Activated CD4-positive, alpha-beta memory T cell treated with anti-CD3 and anti-CD28 coated beads for 36 hours (primary cell): ENCODE measurements at regions of chr1 and their contacts with region 1.

Region 1: GRCh38 chr1:176206961-176207902 is at the start of gene COP1:
- DNase-seq: peak; percentile 98
- H3K4me3 Mint-ChIP-seq: peak within 1 kb of the TSS; percentile 99
- H3K27ac Mint-ChIP-seq: peak within 1 kb of the TSS; percentile 97
- H3K4me1 Mint-ChIP-seq: peaks cover 24% of the 10 kb centered on the region
- H3K27me3 Mint-ChIP-seq: no peaks in the 10 kb centered on the region
- total RNA-seq, gene COP1: 34.2 to 34.7 TPM

Region 2: DNA sequence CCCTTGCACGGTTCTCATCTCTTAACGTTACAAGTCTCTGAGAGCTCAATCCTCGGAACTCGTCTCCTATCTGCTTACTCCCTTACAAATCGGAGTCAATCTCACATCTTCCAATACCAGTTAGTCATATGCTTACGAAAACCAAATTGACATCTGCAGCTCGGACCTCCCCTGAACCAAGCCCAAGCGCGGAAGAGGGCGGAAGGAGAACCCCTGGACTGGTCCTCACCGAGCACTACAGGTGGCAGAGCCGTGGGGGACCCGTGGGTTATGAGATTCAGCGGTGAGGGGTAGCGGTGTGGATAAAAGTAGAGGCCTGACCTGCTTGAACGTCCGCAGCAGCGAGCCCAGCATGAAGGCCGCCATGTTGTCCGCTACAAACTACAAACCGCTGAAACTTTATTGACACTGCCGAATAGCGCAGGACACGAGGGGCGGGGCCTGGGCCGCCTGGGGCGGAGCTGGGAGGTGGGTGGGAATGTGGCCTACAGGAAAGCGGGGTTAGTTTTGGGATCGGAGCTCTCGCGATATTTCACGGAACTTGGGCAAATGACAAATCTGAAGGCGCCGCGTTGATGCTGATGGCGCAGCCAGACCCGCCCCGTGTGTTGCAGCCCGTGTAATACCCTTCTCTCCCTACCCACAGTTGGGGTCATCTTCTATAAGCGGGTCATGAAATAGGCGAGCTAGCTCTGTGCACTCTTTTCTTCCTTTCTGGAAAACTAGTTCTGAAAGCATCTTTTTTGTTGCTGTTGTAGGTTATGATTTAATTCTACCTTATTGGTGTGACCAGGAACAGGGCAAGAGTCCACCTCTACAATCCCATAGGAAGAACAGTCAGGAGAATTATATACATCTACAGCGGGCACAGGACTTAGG is 1184.0 kb before region 1 on chr1 and contains the start of gene MRPS14:
- CTCF ChIA-PET with region 1: no interaction called
- POLR2A ChIA-PET with region 1: interaction called, 3 read pairs
- intact Hi-C with region 1: loop called (anchors 2 kb)
- DNase-seq: peak; percentile 99
- H3K4me3 Mint-ChIP-seq: peak within 1 kb of the TSS; percentile 94
- H3K27ac Mint-ChIP-seq: peak within 1 kb of the TSS; percentile 88
- H3K4me1 Mint-ChIP-seq: peaks cover 24% of the 10 kb centered on the region
- H3K27me3 Mint-ChIP-seq: no peaks in the 10 kb centered on the region
- total RNA-seq, gene MRPS14: 44.7 to 47.6 TPM

Region 3: GRCh38 chr1:176009951-176010350 is 197.3 kb before region 1 on chr1:
- CTCF ChIA-PET with region 1: no interaction called
- POLR2A ChIA-PET with region 1: no interaction called
- intact Hi-C with region 1: no loop called
- DNase-seq: no peak
- H3K4me3 Mint-ChIP-seq: no peak overlapping the region
- H3K27ac Mint-ChIP-seq: no peak overlapping the region
- H3K4me1 Mint-ChIP-seq: no peaks in the 10 kb centered on the region
- H3K27me3 Mint-ChIP-seq: no peaks in the 10 kb centered on the region

Region 4: DNA sequence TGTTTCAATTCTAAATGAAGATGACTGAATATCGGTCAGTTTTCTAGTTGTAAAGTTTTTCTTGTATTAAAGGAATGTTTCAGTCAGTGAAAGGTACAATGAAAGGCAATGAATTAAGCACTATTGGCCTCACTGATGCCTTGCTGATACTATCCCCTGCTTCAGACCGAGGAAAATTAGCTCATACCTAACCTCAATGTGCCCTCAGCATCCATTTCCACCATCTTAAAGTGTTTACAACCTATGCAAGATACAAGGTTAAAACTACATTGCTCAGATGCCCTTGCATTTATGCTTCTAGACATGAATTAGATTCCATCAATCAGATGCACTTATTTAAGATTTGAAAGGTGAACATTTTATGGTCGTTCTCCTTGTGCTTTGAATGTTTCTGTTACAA is 184.7 kb before region 1 on chr1:
- CTCF ChIA-PET with region 1: no interaction called
- POLR2A ChIA-PET with region 1: no interaction called
- intact Hi-C with region 1: loop called (anchors 10 kb)
- DNase-seq: no peak
- H3K4me3 Mint-ChIP-seq: no peak overlapping the region
- H3K27ac Mint-ChIP-seq: no peak overlapping the region
- H3K4me1 Mint-ChIP-seq: peaks cover 13% of the 10 kb centered on the region
- H3K27me3 Mint-ChIP-seq: no peaks in the 10 kb centered on the region

Region 5: DNA sequence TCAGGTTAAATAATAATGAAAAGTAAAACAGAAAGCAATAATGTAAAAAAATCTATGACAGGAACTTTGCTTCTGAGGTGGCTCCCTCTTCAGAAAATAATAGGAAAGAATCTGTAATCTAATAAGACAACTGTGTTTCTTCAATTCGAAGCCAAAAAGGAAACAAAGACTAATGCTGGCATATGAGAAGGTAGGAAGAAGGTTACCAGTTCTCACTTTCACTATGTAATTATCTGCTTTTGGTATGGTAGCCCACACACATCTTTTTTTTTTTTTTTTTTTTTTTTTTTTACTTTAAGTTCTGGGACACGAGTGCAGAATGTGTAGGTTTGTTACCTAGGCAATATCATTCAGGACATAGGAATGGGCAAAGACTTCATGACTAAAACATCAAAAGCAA is 47.2 kb before region 1 on chr1:
- CTCF ChIA-PET with region 1: no interaction called
- POLR2A ChIA-PET with region 1: interaction called, 3 read pairs
- intact Hi-C with region 1: loop called (anchors 1 kb)
- DNase-seq: no peak
- H3K4me3 Mint-ChIP-seq: peak overlapping the region; percentile 36
- H3K27ac Mint-ChIP-seq: peak overlapping the region; percentile 83
- H3K4me1 Mint-ChIP-seq: peaks cover 44% of the 10 kb centered on the region
- H3K27me3 Mint-ChIP-seq: no peaks in the 10 kb centered on the region

Region 6: DNA sequence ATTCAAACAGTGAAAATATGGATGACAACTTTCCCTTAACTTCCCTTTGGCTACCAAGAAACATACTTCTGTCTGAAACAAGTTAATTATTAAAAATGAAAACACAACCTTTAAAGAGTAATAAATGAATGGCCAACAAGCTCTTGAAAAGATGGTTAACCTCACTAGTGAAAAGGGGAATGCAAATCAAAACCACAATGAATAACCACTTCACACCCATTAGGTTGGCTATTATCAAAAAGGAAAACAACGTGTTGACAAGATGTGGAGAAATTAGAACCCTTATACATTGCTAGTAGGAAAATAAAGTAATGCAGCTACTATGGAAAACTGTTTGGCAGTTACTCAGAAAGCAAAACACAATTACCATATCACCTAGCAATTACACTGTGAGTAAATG is 14.2 kb before region 1 on chr1:
- CTCF ChIA-PET with region 1: no interaction called
- POLR2A ChIA-PET with region 1: interaction called, 3 read pairs
- intact Hi-C with region 1: loop called (anchors 1 kb)
- DNase-seq: no peak
- H3K4me3 Mint-ChIP-seq: no peak overlapping the region
- H3K27ac Mint-ChIP-seq: no peak overlapping the region
- H3K4me1 Mint-ChIP-seq: peaks cover 74% of the 10 kb centered on the region
- H3K27me3 Mint-ChIP-seq: no peaks in the 10 kb centered on the region

Region 7: DNA sequence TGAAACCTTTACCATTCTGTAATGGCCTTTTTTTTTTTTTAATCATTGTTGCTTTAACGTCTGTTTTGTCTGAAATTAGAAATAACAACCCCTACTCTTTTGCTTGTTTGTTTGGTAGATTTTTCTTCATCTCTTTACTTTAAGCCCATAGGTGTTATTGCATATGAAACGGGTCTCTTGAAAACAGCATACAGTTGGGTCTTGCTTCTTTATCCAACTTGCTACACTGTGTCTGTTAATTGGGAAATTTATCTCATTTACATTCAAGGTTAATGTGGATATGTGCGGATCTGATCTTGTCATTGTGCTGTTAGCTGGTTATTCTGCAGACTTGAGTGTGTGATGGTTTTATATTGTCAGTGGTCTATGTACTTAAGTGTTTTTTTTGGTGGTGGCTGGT is 78.8 kb after region 1 on chr1:
- CTCF ChIA-PET with region 1: no interaction called
- POLR2A ChIA-PET with region 1: no interaction called
- intact Hi-C with region 1: no loop called
- DNase-seq: no peak
- H3K4me3 Mint-ChIP-seq: no peak overlapping the region
- H3K27ac Mint-ChIP-seq: no peak overlapping the region
- H3K4me1 Mint-ChIP-seq: no peaks in the 10 kb centered on the region
- H3K27me3 Mint-ChIP-seq: peaks cover 16% of the 10 kb centered on the region